ENCODE measurements at regions of chr17 and their contacts with region 1.

Region 1: DNA sequence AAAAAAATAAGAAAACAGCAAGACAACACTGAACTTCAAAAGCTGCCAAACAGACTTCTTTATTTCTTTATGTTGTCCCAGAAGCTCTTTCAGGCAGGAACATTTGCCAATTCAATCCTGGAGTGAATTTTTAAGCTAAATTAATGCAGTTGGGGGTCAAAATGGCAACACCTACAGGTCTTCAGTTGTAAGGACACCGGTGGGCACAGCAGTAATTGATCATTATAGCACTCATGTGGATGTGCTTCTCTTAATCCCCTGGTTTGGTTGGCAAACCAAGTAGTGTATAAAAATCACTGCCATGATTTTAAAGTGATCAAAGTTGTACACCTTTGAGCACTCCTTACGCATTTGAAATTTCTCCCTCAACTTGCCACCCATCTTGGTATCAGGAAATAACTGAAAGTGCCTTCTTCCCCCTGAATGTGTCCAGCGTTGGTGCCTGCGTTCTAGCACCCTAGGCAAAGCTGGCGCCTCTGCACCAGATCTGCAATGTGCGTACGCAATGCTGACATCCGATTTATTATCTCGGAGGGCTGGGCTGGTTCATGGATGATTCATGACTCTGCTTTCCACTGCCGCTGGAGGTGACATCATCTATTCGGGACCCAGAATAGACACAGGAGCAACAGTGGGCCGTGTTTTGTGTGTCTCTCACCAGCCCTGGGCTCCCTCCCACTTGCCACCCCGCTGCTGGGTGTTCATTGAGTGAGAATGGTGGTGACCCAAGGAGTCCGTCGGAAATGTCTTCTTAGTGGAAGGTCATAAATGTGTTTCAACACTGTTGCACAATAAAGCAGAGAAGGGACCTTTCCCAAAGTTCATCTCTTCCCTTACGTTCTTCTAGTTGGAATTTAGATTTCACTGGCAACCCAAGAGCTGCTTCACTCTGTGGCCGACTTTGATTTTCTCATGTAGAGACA is 203.4 kb downstream of the CCDC182 start:
- DNase-seq: no peak
- ATAC-seq: no peak
- H3K4me3 Mint-ChIP-seq: no peak overlapping the region
- H3K27ac Mint-ChIP-seq: no peak overlapping the region
- H3K4me1 Mint-ChIP-seq: peaks cover 58% of the 10 kb centered on the region
- H3K27me3 Mint-ChIP-seq: no peaks in the 10 kb centered on the region
- CTCF ChIP-seq: no peak

Region 2: DNA sequence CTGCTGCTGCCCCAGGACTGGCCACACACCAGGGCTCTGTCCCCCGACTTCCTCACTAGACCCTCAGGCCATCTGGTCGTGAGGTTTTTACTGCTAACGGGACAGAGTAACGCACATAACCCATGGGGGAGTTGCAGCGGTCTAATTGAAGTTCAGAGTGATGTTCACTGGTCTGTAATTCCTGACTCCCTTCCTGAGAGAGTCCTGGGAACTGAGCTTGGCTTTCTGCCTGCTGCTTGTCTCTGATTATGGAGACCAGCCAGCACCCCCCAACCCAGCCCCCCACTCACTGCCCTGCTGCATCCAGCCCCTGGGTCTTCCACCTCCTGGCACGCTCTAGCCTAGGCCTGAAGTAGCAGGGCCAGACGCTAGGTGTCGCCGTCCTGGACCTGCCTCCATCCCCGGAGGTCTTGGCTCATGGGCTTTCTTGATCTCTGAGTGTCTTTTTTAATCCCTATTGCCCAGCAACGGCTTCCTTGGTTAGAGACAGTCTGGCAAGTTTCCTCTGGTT is 10.4 kb after region 1 on chr17:
- CTCF ChIA-PET with region 1: interaction called, 10 read pairs
- POLR2A ChIA-PET with region 1: no interaction called
- DNase-seq: peak; percentile 81
- ATAC-seq: peak; percentile 76
- H3K4me3 Mint-ChIP-seq: no peak overlapping the region
- H3K27ac Mint-ChIP-seq: peak overlapping the region; percentile 70; the same call in 1 of the 2 replicates
- H3K4me1 Mint-ChIP-seq: peaks cover 88% of the 10 kb centered on the region
- H3K27me3 Mint-ChIP-seq: no peaks in the 10 kb centered on the region
- CTCF ChIP-seq: peak; percentile 57

Region 3: DNA sequence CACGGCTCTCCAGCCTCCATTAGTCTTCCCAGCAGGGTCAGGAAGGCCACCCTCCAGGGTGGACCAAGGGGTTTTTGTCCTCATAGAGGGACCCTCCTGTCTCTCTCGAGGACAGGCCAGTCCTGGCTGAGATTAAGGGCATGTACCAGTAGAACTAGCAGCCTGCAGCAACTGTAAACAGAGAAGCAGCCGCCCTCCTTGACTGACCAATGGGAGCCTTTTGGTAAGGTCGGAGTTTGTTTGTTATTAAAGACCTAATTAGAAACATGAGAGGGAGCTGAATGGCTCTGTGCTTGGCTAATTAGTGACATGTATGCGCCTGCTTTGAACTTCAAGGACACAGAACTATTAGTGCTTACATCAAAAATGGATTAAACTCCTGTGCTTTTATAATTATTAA is 123.4 kb after region 1 on chr17:
- CTCF ChIA-PET with region 1: no interaction called
- POLR2A ChIA-PET with region 1: no interaction called
- DNase-seq: no peak
- ATAC-seq: no peak
- H3K4me3 Mint-ChIP-seq: no peak overlapping the region
- H3K27ac Mint-ChIP-seq: peak overlapping the region; percentile 25; the same call in 1 of the 2 replicates
- H3K4me1 Mint-ChIP-seq: peaks cover 57% of the 10 kb centered on the region
- H3K27me3 Mint-ChIP-seq: no peaks in the 10 kb centered on the region
- CTCF ChIP-seq: no peak

Measured in WTC11 (cell line).